Heart right ventricle (tissue), 16 donors: ENCODE measurements at regions of chr22 and their contacts with region 1.

Region 1: DNA sequence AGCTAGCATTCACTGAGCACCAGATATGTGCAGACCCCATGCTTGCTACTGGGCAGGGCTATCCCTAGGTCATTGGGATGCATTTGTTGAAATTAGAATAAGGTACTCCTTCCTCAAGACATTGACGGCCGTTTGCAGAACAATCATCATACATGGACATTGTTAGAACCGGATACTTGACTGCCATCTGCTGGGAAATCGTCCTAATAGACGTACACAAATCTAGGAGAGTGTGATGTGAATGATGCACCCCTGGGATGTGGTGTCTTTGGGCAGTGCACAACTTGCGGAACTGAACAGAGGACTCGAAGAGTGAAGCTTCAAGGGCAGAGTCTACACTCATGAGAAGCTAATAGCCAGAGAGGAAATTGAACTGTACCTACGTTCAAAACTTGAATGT is 35.9 kb downstream of the MYO18B start:
- DNase-seq: no peak
- ATAC-seq: peak in 2 of 8 donors; percentile 5 to 15
- H3K4me3 ChIP-seq: no peak overlapping the region
- H3K27ac ChIP-seq: no peak overlapping the region
- H3K4me1 ChIP-seq: peaks cover 0 to under 1% (median 0%) of the 10 kb centered on the region in 9 donors
- H3K27me3 ChIP-seq: peaks cover 0 to 5% (median 0%) of the 10 kb centered on the region in 7 donors
- CTCF ChIP-seq: peak in 6 of 9 donors; percentile 25 to 43 (median 30)

Region 2: GRCh38 chr22:25465949-25466348 is 311.9 kb before region 1 on chr22:
- intact Hi-C with region 1: loop called (anchors 2 to 5 kb)
- DNase-seq: no peak
- ATAC-seq: no peak
- H3K4me3 ChIP-seq: no peak overlapping the region
- H3K27ac ChIP-seq: no peak overlapping the region
- H3K4me1 ChIP-seq: peaks cover 0 to 4% (median 0%) of the 10 kb centered on the region in 9 donors
- H3K27me3 ChIP-seq: no peaks in the 10 kb centered on the region
- CTCF ChIP-seq: no peak

Region 3: GRCh38 chr22:25546751-25547150 is 231.1 kb before region 1 on chr22:
- intact Hi-C with region 1: loop called in 2 of 10 experiments (anchors 5 to 10 kb)
- DNase-seq: no peak
- ATAC-seq: peak in 1 of 8 donors; percentile 50
- H3K4me3 ChIP-seq: no peak overlapping the region
- H3K27ac ChIP-seq: peak overlapping the region in 1 of 10 donors; percentile 14
- H3K4me1 ChIP-seq: peaks cover 0 to 23% (median 0%) of the 10 kb centered on the region in 9 donors
- H3K27me3 ChIP-seq: no peaks in the 10 kb centered on the region
- CTCF ChIP-seq: no peak

Region 4: DNA sequence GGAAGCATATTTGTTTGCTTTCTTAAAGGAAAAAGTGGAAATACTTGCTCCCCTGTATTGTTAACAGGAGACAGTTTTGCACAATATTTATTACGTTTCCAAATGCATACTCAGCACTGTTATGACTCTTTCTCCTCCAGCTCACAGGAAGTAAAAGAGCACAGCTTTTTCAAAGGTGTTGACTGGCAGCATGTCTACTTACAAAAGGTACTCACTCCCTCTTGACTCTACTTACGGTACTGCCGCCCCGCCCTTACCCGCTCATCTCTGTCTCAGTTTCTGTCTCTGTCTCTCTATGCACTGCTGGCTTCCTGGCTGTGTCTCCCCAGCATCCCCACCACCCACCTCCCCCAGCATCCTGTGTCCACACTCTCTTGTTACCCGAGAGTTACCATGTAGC is 68.1 kb before region 1 on chr22:
- intact Hi-C with region 1: loop called in 4 of 10 experiments (anchors 5 to 10 kb)
- DNase-seq: no peak
- ATAC-seq: no peak
- H3K4me3 ChIP-seq: no peak overlapping the region
- H3K27ac ChIP-seq: no peak overlapping the region
- H3K4me1 ChIP-seq: peaks cover 0 to 12% (median 0%) of the 10 kb centered on the region in 9 donors
- H3K27me3 ChIP-seq: no peaks in the 10 kb centered on the region
- CTCF ChIP-seq: no peak

Region 5: GRCh38 chr22:25729016-25729995 is 48.6 kb before region 1 on chr22:
- intact Hi-C with region 1: loop called in 1 of 10 experiments (anchors 10 kb)
- DNase-seq: no peak
- ATAC-seq: no peak
- H3K4me3 ChIP-seq: no peak overlapping the region
- H3K27ac ChIP-seq: no peak overlapping the region
- H3K4me1 ChIP-seq: no peaks in the 10 kb centered on the region
- H3K27me3 ChIP-seq: no peaks in the 10 kb centered on the region
- CTCF ChIP-seq: no peak

Region 6: GRCh38 chr22:25898689-25899365 is 121.0 kb after region 1 on chr22:
- intact Hi-C with region 1: no loop called
- DNase-seq: no peak
- ATAC-seq: no peak
- H3K4me3 ChIP-seq: no peak overlapping the region
- H3K27ac ChIP-seq: peak overlapping the region in 3 of 10 donors; percentile 19 to 39 (median 36)
- H3K4me1 ChIP-seq: peaks cover 0 to 15% (median 0%) of the 10 kb centered on the region in 9 donors
- H3K27me3 ChIP-seq: peaks cover 0 to 6% (median 0%) of the 10 kb centered on the region in 7 donors
- CTCF ChIP-seq: peak in 5 of 9 donors; percentile 15 to 23 (median 20)

Region 7: DNA sequence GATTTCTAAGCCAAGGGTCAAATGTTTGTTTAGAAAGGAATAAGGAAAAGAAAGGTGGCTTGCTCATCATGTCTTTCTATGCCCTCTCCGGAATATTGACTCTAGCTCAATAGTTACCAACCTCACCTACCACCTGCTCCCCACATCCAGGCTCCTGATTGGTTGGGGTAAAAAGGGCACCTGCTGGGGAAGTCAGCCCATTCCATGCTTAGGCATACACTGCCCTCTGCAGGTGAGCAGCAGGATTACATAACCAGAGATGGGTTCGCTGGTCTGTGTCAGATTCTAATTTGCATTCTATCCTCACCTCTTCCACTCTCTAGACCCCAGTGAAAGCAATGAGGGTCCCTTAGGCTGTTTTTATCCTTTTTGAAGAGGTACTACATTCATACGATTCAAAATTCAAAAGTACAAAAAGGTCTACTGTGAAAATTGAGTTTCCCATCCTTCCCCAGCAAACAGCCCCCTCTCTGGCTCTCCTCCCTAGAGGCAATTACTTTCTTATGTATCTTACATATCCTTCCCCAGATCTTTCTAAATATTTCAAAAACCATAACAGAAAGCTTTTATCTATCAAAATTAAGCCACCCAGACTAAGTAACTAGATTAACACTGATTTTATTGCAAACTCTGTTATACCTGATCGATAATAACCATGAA is 553.2 kb after region 1 on chr22:
- intact Hi-C with region 1: loop called in 3 of 10 experiments (anchors 10 kb)
- DNase-seq: peak in 1 of 2 donors; percentile 15
- ATAC-seq: peak in 2 of 8 donors; percentile 49 to 65
- H3K4me3 ChIP-seq: no peak overlapping the region
- H3K27ac ChIP-seq: no peak overlapping the region
- H3K4me1 ChIP-seq: no peaks in the 10 kb centered on the region
- H3K27me3 ChIP-seq: peaks cover 0 to 30% (median 16%) of the 10 kb centered on the region in 7 donors
- CTCF ChIP-seq: peak; percentile 47 to 83 (median 78)